WTC11 (cell line): ENCODE measurements at regions of chr12 and their contacts with region 1.

Region 1: GRCh38 chr12:49342066-49342913 is 4.4 kb upstream of the DNAJC22 start:
- DNase-seq: peak; percentile 96
- ATAC-seq: peak; percentile 74
- H3K4me3 Mint-ChIP-seq: peak overlapping the region; percentile 67
- H3K27ac Mint-ChIP-seq: no peak overlapping the region
- H3K4me1 Mint-ChIP-seq: peaks cover 59% of the 10 kb centered on the region
- H3K27me3 Mint-ChIP-seq: peaks cover 99% of the 10 kb centered on the region
- CTCF ChIP-seq: peak; percentile 92

Region 2: GRCh38 chr12:49232940-49233841 is 109.1 kb before region 1 on chr12:
- CTCF ChIA-PET with region 1: interaction called, 12 read pairs
- POLR2A ChIA-PET with region 1: no interaction called
- DNase-seq: peak; percentile 62
- ATAC-seq: peak; percentile 34
- H3K4me3 Mint-ChIP-seq: peak overlapping the region; percentile 38
- H3K27ac Mint-ChIP-seq: no peak overlapping the region
- H3K4me1 Mint-ChIP-seq: peaks cover 27% of the 10 kb centered on the region
- H3K27me3 Mint-ChIP-seq: peaks cover 6% of the 10 kb centered on the region; the same call in 1 of the 2 replicates
- CTCF ChIP-seq: no peak

Region 3: DNA sequence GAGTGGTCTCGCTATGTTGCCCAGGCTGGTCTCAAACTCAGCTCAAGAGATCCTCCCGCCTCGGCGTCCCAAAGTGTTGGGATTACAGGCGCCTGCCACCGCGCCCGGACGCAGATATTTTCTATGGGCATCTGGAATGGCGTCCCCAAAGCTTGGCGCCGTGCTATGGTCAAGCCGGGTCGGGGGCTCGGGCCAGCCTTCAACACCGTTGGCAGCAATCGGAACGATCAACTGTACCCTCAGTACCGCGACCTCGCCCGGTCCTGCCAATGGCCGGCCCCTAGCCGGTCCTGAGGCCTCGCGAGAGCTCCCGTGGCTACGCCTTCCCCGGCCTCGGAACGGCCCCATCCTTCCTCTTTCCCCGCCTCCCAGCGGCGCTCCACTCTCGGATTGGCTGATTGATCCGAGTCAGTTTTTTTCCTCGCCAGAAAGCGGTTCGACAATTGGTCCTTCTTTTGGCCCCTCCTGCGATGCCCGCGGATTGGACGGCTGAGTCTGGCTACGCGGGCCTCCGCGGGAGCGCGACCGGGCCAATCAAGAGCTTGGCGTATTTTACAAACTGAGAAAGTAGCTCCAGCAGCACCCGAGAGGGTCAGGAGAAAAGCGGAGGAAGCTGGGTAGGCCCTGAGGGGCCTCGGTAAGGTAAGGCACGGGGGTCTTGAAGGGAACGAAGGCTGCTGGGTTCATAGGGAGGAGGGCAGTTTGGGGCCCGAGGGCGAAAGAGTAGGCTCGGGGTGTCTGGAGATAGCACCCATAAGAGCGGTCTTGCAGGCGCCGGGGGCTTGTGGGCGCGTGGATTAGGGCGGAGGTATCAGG is 19.4 kb before region 1 on chr12 and contains the start of gene TROAP:
- CTCF ChIA-PET with region 1: interaction called, 66 read pairs
- POLR2A ChIA-PET with region 1: interaction called, 9 read pairs
- DNase-seq: peak; percentile 99
- ATAC-seq: peak; percentile 99
- H3K4me3 Mint-ChIP-seq: peak within 1 kb of the TSS; percentile 99
- H3K27ac Mint-ChIP-seq: peak within 1 kb of the TSS; percentile 91
- H3K4me1 Mint-ChIP-seq: peaks cover 15% of the 10 kb centered on the region
- H3K27me3 Mint-ChIP-seq: peaks cover 15% of the 10 kb centered on the region
- CTCF ChIP-seq: no peak
- total RNA-seq, gene TROAP: 78.5 to 89.2 TPM (median 80.0 TPM) in 3 replicates

Region 4: GRCh38 chr12:49366652-49367380 is 24.5 kb after region 1 on chr12:
- CTCF ChIA-PET with region 1: interaction called, 69 read pairs
- POLR2A ChIA-PET with region 1: interaction called, 8 read pairs
- DNase-seq: peak; percentile 92
- ATAC-seq: peak; percentile 89
- H3K4me3 Mint-ChIP-seq: peak overlapping the region; percentile 89
- H3K27ac Mint-ChIP-seq: peak overlapping the region; percentile 97
- H3K4me1 Mint-ChIP-seq: peaks cover 30% of the 10 kb centered on the region
- H3K27me3 Mint-ChIP-seq: peaks cover 12% of the 10 kb centered on the region
- CTCF ChIP-seq: no peak

Region 5: GRCh38 chr12:49538510-49539403 is 196.5 kb after region 1 on chr12 and contains the start of gene KCNH3:
- CTCF ChIA-PET with region 1: interaction called, 34 read pairs
- POLR2A ChIA-PET with region 1: no interaction called
- DNase-seq: peak; percentile 75
- ATAC-seq: peak; percentile 25
- H3K4me3 Mint-ChIP-seq: peak within 1 kb of the TSS; percentile 71
- H3K27ac Mint-ChIP-seq: no peak within 1 kb of the TSS
- H3K4me1 Mint-ChIP-seq: peaks cover 31% of the 10 kb centered on the region
- H3K27me3 Mint-ChIP-seq: peaks cover 92% of the 10 kb centered on the region
- CTCF ChIP-seq: no peak
- total RNA-seq, gene KCNH3: 0.27 to 0.44 TPM (median 0.44 TPM) in 3 replicates

Region 6: DNA sequence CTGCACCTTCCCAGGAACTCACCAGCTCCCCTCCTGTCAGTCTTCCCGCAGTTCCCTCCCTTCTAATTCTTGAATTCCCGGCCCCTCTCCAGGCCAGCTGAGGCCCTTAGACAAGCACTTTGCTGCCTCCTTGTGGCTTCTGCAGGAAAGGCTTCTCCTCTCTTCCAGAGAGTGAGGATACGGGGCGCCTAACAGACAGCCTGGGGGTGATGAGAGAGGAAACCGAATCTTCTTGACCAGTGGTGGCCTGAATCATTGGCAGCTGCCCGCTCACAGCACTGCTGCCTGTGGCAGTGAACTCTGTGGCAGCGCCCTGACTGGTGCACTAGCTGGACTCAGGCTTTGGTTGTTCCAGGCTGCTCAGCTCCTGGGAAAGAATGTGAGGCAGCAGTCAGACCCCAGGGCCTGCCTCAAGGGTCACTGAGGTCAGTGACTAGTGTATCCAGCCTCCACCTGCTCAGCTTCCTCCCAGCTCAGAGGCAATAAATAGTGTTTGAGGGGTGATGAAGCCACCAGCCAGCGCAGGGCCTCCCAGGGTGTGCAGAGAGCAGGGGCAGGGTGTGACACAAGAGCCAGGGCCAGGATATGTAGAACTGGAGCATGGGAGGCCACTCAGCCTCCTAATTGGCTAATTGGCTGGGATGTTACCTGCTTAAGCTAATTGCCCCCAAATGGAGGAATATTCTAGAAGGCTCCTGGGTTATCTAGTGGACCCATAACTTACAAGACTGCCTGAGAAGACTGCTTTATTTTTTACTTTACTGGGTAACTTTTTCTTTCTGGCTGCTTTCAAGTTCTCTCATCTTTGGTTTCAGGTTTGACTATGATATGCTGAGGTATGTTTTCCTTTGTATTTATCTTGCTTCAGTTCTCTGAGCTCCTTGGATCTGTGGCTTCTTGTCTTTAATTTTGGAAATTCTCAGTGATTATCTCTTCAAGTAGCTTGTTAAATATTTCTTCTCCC is 238.6 kb after region 1 on chr12:
- CTCF ChIA-PET with region 1: interaction called, 15 read pairs
- POLR2A ChIA-PET with region 1: no interaction called
- DNase-seq: peak; percentile 94
- ATAC-seq: peak; percentile 96
- H3K4me3 Mint-ChIP-seq: no peak overlapping the region
- H3K27ac Mint-ChIP-seq: no peak overlapping the region
- H3K4me1 Mint-ChIP-seq: peaks cover 8% of the 10 kb centered on the region
- H3K27me3 Mint-ChIP-seq: no peaks in the 10 kb centered on the region
- CTCF ChIP-seq: peak; percentile 66